Transverse colon (tissue), 4 donors: ENCODE measurements at regions of chr3 and their contacts with region 1.

Region 1: DNA sequence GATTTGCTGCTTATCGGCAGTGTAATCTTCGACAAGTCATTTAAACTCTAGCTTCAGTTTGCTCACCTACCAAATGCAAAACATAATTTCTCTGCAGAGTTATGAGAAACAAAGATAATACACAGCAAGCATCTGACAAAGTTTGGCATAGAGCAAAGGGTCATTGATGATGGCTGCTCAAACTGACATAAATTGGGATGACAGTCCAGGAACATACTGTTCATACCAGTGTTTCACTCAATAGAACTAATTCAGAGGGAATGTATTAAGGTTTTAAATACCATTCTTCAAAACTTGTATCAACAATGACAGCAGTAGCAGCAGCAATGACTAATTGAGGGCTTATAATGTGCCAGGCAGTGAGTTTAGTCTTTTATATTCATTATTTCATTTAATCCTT is 137.6 kb downstream of the SPATA16 start:
- DNase-seq: no peak
- H3K4me3 ChIP-seq: no peak overlapping the region
- H3K27ac ChIP-seq: no peak overlapping the region
- H3K4me1 ChIP-seq: no peaks in the 10 kb centered on the region
- H3K27me3 ChIP-seq: no peaks in the 10 kb centered on the region
- CTCF ChIP-seq: no peak
- EP300 ChIP-seq: no peak
- POLR2A ChIP-seq: no peak

Region 2: DNA sequence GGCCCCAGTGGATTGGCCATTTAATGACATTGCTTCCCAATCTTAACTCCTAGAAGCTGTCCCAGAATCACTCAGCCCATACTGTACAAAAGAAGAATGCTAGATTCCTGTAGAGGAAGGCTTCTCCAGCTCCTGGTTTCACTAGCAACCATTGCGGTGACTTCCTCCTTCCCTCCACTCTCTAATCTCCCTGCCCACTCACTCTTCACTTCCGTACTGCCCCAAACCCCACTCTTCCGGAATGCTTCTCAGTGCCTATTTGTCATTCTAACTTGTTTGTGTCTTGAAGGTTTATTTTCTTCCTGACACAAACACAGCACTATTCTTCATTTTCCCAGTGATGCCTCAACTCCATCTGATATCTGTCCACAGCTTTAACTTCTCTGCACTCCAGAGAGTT is 234.6 kb after region 1 on chr3:
- in situ Hi-C with region 1: no loop called
- intact Hi-C with region 1: loop called (anchors 5 kb)
- DNase-seq: no peak
- H3K4me3 ChIP-seq: no peak overlapping the region
- H3K27ac ChIP-seq: no peak overlapping the region
- H3K4me1 ChIP-seq: no peaks in the 10 kb centered on the region
- H3K27me3 ChIP-seq: no peaks in the 10 kb centered on the region
- CTCF ChIP-seq: no peak
- EP300 ChIP-seq: no peak
- POLR2A ChIP-seq: no peak